ENCODE measurements at regions of chr1 and their contacts with region 1.

Region 1: GRCh38 chr1:184044603-184045376 is 6.7 kb upstream of the TSEN15 start:
- DNase-seq: no peak
- ATAC-seq: no peak
- H3K4me3 ChIP-seq: no peak overlapping the region
- H3K27ac ChIP-seq: no peak overlapping the region
- H3K4me1 ChIP-seq: peaks cover 2% of the 10 kb centered on the region; the same call in 1 of the 2 replicates
- H3K27me3 ChIP-seq: no peaks in the 10 kb centered on the region
- CTCF ChIP-seq: no peak
- POLR2A ChIP-seq: no peak
- RAD21 ChIP-seq: no peak

Region 2: DNA sequence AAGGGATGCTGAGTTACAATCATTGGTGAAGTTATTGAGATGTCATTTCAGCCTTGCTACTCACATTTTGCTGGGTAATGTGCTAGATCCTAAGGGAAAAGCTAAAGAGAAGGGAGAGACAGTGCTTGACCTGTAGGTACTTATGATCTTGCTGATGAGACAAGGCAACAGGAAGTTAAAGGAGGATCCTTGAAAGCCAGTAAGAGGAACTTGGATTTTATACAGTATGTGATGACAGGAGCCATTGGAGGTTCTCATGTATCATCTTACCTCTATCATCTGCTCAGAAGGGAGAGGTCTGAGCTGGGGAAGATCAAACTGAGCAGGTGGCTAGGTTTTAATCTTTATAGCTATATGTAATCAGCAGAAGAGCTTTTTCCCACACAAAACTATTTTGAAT is 398.0 kb before region 1 on chr1:
- CTCF ChIA-PET with region 1: no interaction called
- POLR2A ChIA-PET with region 1: no interaction called
- dilution Hi-C with region 1: no loop called
- in situ Hi-C with region 1: loop called (anchors 10 kb)
- intact Hi-C with region 1: no loop called
- DNase-seq: no peak
- ATAC-seq: no peak
- H3K4me3 ChIP-seq: no peak overlapping the region
- H3K27ac ChIP-seq: no peak overlapping the region
- H3K4me1 ChIP-seq: no peaks in the 10 kb centered on the region
- H3K27me3 ChIP-seq: no peaks in the 10 kb centered on the region
- CTCF ChIP-seq: no peak
- POLR2A ChIP-seq: no peak
- RAD21 ChIP-seq: no peak